ENCODE measurements at regions of chr4 and their contacts with region 1.

Region 1: DNA sequence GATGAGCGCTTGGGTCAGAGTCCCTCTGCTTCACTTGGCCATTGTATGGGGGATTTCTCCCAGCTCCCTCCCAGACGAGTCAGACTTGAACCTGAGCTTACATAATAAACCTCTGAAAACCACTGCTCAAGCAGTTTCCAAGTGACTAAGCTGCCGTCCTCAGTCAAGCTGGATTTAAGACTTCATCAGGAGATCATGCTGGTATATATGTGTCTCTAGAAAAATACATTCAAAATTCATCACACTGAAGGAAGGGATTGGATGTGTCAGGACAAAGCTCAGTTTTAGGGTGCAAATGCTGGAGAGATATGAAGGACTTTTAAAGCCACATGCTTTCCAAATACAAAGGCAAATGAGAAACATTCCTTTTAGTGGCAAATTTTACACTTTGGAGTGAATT is 114.3 kb downstream of the QDPR start:
- DNase-seq: no peak

Region 2: GRCh38 chr4:17736484-17736883 is 338.9 kb after region 1 on chr4:
- intact Hi-C with region 1: loop called in 1 of 2 experiments (anchors 5 kb)
- DNase-seq: no peak

Region 3: GRCh38 chr4:18209448-18209847 is 811.8 kb after region 1 on chr4:
- intact Hi-C with region 1: no loop called
- DNase-seq: no peak

Measured in posterior vena cava (tissue), 2 donors.